Naive thymus-derived CD4-positive, alpha-beta T cell (primary cell): ENCODE measurements at regions of chr13 and their contacts with region 1.

Region 1: DNA sequence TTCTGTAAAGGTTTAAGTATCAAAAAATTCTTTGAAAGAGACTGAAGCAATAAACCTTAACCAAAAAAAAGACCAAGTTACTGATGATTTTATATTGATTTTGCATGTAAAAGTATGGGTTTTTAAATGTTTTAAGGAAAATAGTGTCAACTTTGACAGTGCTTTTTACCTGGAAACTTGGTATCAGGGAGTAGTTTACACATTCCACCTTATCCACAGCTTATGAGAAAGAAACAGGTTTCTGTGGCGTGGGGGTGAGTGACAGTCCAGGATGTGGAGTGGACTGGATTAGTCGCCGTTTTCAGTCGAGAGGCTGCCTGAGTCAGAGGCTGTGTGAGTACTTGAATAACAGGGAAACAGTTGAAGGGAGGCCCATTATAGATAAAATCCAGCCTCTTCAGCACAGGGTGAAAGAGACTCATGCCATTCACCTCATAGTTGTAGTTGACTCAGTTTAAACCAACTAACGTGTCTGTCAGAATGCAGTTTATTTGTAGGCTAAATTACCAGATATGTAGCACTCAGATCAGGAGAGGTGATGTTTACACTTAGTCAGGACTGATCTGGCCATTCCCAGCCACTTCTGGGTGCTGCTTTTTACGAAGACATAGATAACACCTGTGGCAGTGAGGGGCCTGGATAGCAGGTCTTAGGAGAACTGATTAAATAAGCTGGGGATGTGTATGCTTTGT is 595 bp upstream of the GPR183 start:
- DNase-seq: peak in 2 of 9 donors; percentile 44 to 69
- ATAC-seq: peak; percentile 40
- H3K4me3 ChIP-seq: peak overlapping the region; percentile 89
- H3K4me3 Mint-ChIP-seq: peak overlapping the region; percentile 89 to 100 (median 94)
- H3K27ac ChIP-seq: peak overlapping the region; percentile 88
- H3K27ac Mint-ChIP-seq: peak overlapping the region; percentile 81 to 99 (median 95)
- H3K4me1 ChIP-seq: peaks cover 49 to 50% of the 10 kb centered on the region in 2 donors
- H3K4me1 Mint-ChIP-seq: peaks cover 56 to 84% (median 77%) of the 10 kb centered on the region in 7 donors
- H3K27me3 ChIP-seq: no peaks in the 10 kb centered on the region
- H3K27me3 Mint-ChIP-seq: no peaks in the 10 kb centered on the region

Region 2: DNA sequence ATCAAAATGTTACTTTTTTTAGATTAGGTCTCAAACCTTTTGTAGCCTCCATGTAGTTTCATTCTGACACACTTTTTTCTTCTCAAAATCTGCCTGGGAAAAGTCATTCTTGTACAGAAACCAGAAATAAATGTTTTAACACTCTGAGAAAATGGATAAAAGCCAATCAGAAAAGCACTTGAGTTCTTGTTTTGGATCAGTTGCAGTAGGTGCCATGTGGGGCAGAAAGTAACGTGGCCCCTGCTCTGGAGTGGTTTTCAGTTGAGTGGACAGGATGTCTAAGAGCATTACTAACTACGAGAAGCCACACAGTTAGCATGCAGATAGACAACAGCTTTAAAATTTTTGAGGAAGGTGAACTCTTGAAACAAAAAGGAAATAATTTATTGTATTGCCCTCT is 19.7 kb before region 1 on chr13:
- CTCF ChIA-PET with region 1: interaction called, 4 read pairs
- POLR2A ChIA-PET with region 1: interaction called, 208 read pairs
- intact Hi-C with region 1: loop called in 1 of 2 experiments (anchors 2 kb)
- DNase-seq: no peak
- ATAC-seq: no peak
- H3K4me3 ChIP-seq: no peak overlapping the region
- H3K4me3 Mint-ChIP-seq: peak overlapping the region in 8 of 10 donors; percentile 3 to 76 (median 54)
- H3K27ac ChIP-seq: peak overlapping the region; percentile 32
- H3K27ac Mint-ChIP-seq: peak overlapping the region; percentile 60 to 96 (median 89)
- H3K4me1 ChIP-seq: peaks cover 69 to 79% of the 10 kb centered on the region in 2 donors
- H3K4me1 Mint-ChIP-seq: peaks cover 64 to 97% (median 93%) of the 10 kb centered on the region in 7 donors
- H3K27me3 ChIP-seq: no peaks in the 10 kb centered on the region
- H3K27me3 Mint-ChIP-seq: no peaks in the 10 kb centered on the region

Region 3: DNA sequence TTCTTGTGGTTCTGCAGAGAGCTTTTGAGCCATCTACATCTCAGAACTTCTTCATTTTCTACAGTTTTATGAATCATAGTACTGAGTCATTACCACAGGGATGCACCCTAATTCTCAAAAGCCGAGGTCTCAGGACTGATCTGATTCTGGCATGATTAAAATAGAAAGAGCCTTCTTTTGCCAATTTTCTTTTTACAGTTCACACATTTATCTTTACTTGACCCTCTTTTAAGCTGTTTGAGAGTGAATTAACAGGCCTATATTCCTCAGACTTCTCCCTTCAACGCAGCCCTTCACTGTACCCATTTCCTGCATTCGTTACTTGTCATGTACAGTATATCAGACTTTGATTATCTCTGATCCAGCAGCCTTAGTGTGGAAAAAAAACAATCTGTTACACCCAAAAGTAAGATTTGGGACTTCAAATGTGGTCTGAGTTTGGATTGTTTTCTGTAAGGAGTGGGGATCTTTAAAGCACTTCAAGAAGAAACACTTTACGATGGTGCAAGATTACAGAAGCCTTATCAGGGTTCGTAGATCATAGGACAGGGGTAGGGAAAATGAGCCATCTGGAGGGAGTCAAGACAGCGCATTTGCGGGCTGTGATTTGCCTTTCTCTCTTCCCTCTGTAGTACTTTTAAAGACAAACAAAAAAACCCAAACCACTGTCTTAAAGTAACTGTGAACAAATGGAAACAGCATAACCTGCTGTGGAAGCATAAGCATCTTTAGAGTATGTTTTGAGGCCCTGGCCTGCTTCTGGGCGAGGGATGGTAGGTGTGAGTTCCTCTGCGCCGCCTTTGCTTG is 14.7 kb after region 1 on chr13:
- CTCF ChIA-PET with region 1: interaction called, 3 read pairs
- POLR2A ChIA-PET with region 1: interaction called, 41 read pairs
- intact Hi-C with region 1: loop called (anchors 1 kb)
- DNase-seq: peak in 6 of 9 donors; percentile 35 to 64 (median 48)
- ATAC-seq: peak; percentile 81
- H3K4me3 ChIP-seq: peak overlapping the region; percentile 2
- H3K4me3 Mint-ChIP-seq: peak overlapping the region; percentile 51 to 84 (median 67)
- H3K27ac ChIP-seq: peak overlapping the region; percentile 77
- H3K27ac Mint-ChIP-seq: peak overlapping the region; percentile 88 to 99 (median 95)
- H3K4me1 ChIP-seq: peaks cover 65 to 66% of the 10 kb centered on the region in 2 donors
- H3K4me1 Mint-ChIP-seq: peaks cover 38 to 95% (median 75%) of the 10 kb centered on the region in 7 donors
- H3K27me3 ChIP-seq: no peaks in the 10 kb centered on the region
- H3K27me3 Mint-ChIP-seq: no peaks in the 10 kb centered on the region

Region 4: GRCh38 chr13:99339736-99340397 is 32.1 kb after region 1 on chr13:
- CTCF ChIA-PET with region 1: interaction called, 7 read pairs
- POLR2A ChIA-PET with region 1: interaction called, 57 read pairs
- intact Hi-C with region 1: loop called in 1 of 2 experiments (anchors 5 kb)
- DNase-seq: peak in 6 of 9 donors; percentile 32 to 56 (median 49)
- ATAC-seq: peak; percentile 76
- H3K4me3 ChIP-seq: peak overlapping the region; percentile 42
- H3K4me3 Mint-ChIP-seq: peak overlapping the region in 9 of 10 donors; percentile 23 to 79 (median 65)
- H3K27ac ChIP-seq: peak overlapping the region; percentile 41
- H3K27ac Mint-ChIP-seq: peak overlapping the region in 8 of 9 donors; percentile 46 to 96 (median 88)
- H3K4me1 ChIP-seq: peaks cover 39 to 41% of the 10 kb centered on the region in 2 donors
- H3K4me1 Mint-ChIP-seq: peaks cover 47 to 96% (median 82%) of the 10 kb centered on the region in 7 donors
- H3K27me3 ChIP-seq: no peaks in the 10 kb centered on the region
- H3K27me3 Mint-ChIP-seq: no peaks in the 10 kb centered on the region

Region 5: GRCh38 chr13:99366075-99366987 is 58.5 kb after region 1 on chr13:
- CTCF ChIA-PET with region 1: interaction called, 8 read pairs
- POLR2A ChIA-PET with region 1: interaction called, 364 read pairs
- intact Hi-C with region 1: loop called in 1 of 2 experiments (anchors 1 kb)
- DNase-seq: peak in 2 of 9 donors; percentile 21 to 41
- ATAC-seq: peak; percentile 30
- H3K4me3 ChIP-seq: peak overlapping the region; percentile 6
- H3K4me3 Mint-ChIP-seq: peak overlapping the region in 9 of 10 donors; percentile 46 to 87 (median 78)
- H3K27ac ChIP-seq: peak overlapping the region; percentile 78
- H3K27ac Mint-ChIP-seq: peak overlapping the region; percentile 50 to 100 (median 99)
- H3K4me1 ChIP-seq: peaks cover 76 to 81% of the 10 kb centered on the region in 2 donors
- H3K4me1 Mint-ChIP-seq: peaks cover 55 to 100% (median 95%) of the 10 kb centered on the region in 7 donors
- H3K27me3 ChIP-seq: no peaks in the 10 kb centered on the region
- H3K27me3 Mint-ChIP-seq: no peaks in the 10 kb centered on the region

Region 6: GRCh38 chr13:99386911-99387788 is 79.4 kb after region 1 on chr13:
- CTCF ChIA-PET with region 1: interaction called, 20 read pairs
- POLR2A ChIA-PET with region 1: interaction called, 364 read pairs
- intact Hi-C with region 1: loop called (anchors 1 to 5 kb)
- DNase-seq: peak; percentile 74 to 89 (median 84)
- ATAC-seq: peak; percentile 65
- H3K4me3 ChIP-seq: no peak overlapping the region
- H3K4me3 Mint-ChIP-seq: peak overlapping the region in 9 of 10 donors; percentile 2 to 73 (median 62)
- H3K27ac ChIP-seq: peak overlapping the region; percentile 85
- H3K27ac Mint-ChIP-seq: peak overlapping the region; percentile 44 to 99 (median 98)
- H3K4me1 ChIP-seq: peaks cover 59 to 65% of the 10 kb centered on the region in 2 donors
- H3K4me1 Mint-ChIP-seq: peaks cover 35 to 83% (median 76%) of the 10 kb centered on the region in 7 donors
- H3K27me3 ChIP-seq: no peaks in the 10 kb centered on the region
- H3K27me3 Mint-ChIP-seq: no peaks in the 10 kb centered on the region

Region 7: GRCh38 chr13:99436686-99437416 is 129.1 kb after region 1 on chr13:
- CTCF ChIA-PET with region 1: interaction called, 18 read pairs
- POLR2A ChIA-PET with region 1: interaction called, 13 read pairs
- intact Hi-C with region 1: loop called in 1 of 2 experiments (anchors 1 kb)
- DNase-seq: peak; percentile 92 to 98 (median 93)
- ATAC-seq: peak; percentile 69
- H3K4me3 ChIP-seq: peak overlapping the region; percentile 39
- H3K4me3 Mint-ChIP-seq: peak overlapping the region; percentile 17 to 79 (median 68)
- H3K27ac ChIP-seq: peak overlapping the region; percentile 83
- H3K27ac Mint-ChIP-seq: peak overlapping the region; percentile 67 to 99 (median 87)
- H3K4me1 ChIP-seq: peaks cover 43 to 48% of the 10 kb centered on the region in 2 donors
- H3K4me1 Mint-ChIP-seq: peaks cover 28 to 68% (median 59%) of the 10 kb centered on the region in 7 donors
- H3K27me3 ChIP-seq: no peaks in the 10 kb centered on the region
- H3K27me3 Mint-ChIP-seq: peaks cover 0 to 30% (median 0%) of the 10 kb centered on the region in 5 donors